OCI-LY7 (cell line): ENCODE measurements at regions of chr6 and their contacts with region 1.

Region 1: GRCh38 chr6:95431637-95432228 is 145.6 kb upstream of the MANEA start:
- DNase-seq: peak; percentile 42
- H3K4me3 ChIP-seq: no peak overlapping the region
- H3K27ac ChIP-seq: no peak overlapping the region
- H3K4me1 ChIP-seq: no peaks in the 10 kb centered on the region
- CTCF ChIP-seq: peak; percentile 90

Region 2: GRCh38 chr6:95366414-95366813 is 65.3 kb before region 1 on chr6:
- CTCF ChIA-PET with region 1: no interaction called
- POLR2A ChIA-PET with region 1: no interaction called
- intact Hi-C with region 1: no loop called
- DNase-seq: no peak
- H3K4me3 ChIP-seq: no peak overlapping the region
- H3K27ac ChIP-seq: no peak overlapping the region
- H3K4me1 ChIP-seq: no peaks in the 10 kb centered on the region
- CTCF ChIP-seq: no peak

Region 3: DNA sequence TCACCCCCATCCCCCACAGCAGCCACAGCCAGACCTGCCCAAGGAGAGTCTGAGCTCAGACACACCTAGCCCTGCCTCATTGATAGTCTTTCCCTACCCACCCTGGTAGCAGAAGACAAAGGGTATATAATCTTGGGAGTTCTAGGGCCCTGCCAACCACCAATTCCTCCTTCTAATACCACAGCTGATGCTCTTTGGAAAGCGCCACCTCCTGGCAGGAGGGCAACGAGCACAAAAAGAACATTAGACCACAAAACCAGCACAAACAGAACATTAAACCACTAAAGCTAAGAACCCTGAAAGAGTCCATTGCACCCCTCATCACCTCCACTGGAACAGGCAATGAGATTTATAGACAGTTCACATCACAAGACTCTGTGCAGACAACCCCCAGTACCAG is 388.2 kb after region 1 on chr6:
- CTCF ChIA-PET with region 1: no interaction called
- POLR2A ChIA-PET with region 1: no interaction called
- intact Hi-C with region 1: loop called (anchors 5 kb)
- DNase-seq: peak; percentile 1
- H3K4me3 ChIP-seq: no peak overlapping the region
- H3K27ac ChIP-seq: no peak overlapping the region
- H3K4me1 ChIP-seq: no peaks in the 10 kb centered on the region
- CTCF ChIP-seq: peak; percentile 64

Region 4: GRCh38 chr6:95866732-95867131 is 435.0 kb after region 1 on chr6:
- CTCF ChIA-PET with region 1: no interaction called
- POLR2A ChIA-PET with region 1: no interaction called
- intact Hi-C with region 1: loop called (anchors 2 kb)
- DNase-seq: peak; percentile 9
- H3K4me3 ChIP-seq: no peak overlapping the region
- H3K27ac ChIP-seq: no peak overlapping the region
- H3K4me1 ChIP-seq: no peaks in the 10 kb centered on the region
- CTCF ChIP-seq: peak; percentile 72

Region 5: GRCh38 chr6:95923518-95923917 is 491.8 kb after region 1 on chr6:
- CTCF ChIA-PET with region 1: no interaction called
- POLR2A ChIA-PET with region 1: no interaction called
- intact Hi-C with region 1: loop called (anchors 5 kb)
- DNase-seq: peak; percentile 22
- H3K4me3 ChIP-seq: no peak overlapping the region
- H3K27ac ChIP-seq: no peak overlapping the region
- H3K4me1 ChIP-seq: no peaks in the 10 kb centered on the region
- CTCF ChIP-seq: peak; percentile 80